MCF 10A (cell line): ENCODE measurements at regions of chr17 and their contacts with region 1.

Region 1: DNA sequence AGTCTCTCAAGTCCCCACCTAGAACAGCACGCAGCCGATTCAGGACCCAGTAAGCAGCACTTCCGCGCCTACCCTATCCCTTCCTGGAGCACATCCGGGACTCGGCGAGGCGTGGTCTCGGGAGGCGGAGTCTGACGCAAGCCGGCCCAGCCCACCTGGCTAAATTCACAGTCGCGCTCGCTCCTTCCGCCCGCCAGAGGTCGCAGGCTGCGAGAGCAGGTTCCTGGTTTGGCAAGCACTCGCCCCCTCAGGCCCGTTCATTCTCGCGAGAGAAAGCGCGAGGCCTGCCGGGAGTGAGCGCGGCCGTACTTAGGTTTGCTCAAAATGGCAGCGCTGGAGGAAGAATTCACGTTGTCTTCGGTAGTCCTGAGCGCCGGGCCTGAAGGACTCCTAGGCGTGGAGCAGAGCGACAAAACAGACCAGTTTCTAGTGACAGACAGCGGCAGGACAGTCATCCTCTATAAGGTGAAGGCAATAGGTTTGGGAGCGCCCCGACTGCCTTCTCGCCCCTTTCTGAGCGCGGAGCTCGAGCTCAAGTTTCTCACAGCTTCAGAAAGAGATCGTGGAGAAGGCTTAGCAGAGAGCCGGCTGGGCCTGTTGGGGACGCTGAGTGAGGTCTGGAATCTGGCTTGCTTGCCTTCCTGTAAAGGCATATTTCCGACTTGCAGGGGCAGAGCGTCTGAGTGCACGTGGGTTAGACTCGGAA is at the start of gene NOL11:
- DNase-seq: peak; percentile 97
- H3K4me3 Mint-ChIP-seq: peak within 1 kb of the TSS; percentile 98
- H3K27ac Mint-ChIP-seq: peak within 1 kb of the TSS; percentile 100
- H3K4me1 Mint-ChIP-seq: no peaks in the 10 kb centered on the region
- H3K27me3 Mint-ChIP-seq: no peaks in the 10 kb centered on the region
- CTCF ChIP-seq: peak; percentile 74
- total RNA-seq, gene NOL11: 45.4 and 50.4 TPM in 2 replicates

Region 2: GRCh38 chr17:67366193-67367157 is 351.3 kb before region 1 on chr17 and contains the start of gene PSMD12:
- CTCF ChIA-PET with region 1: no interaction called
- POLR2A ChIA-PET with region 1: interaction called, 19 read pairs
- intact Hi-C with region 1: loop called (anchors 10 kb)
- DNase-seq: peak; percentile 90
- H3K4me3 Mint-ChIP-seq: peak within 1 kb of the TSS; percentile 90
- H3K27ac Mint-ChIP-seq: peak within 1 kb of the TSS; percentile 74
- H3K4me1 Mint-ChIP-seq: peaks cover 18% of the 10 kb centered on the region
- H3K27me3 Mint-ChIP-seq: no peaks in the 10 kb centered on the region
- CTCF ChIP-seq: no peak
- total RNA-seq, gene PSMD12: 93.1 and 107 TPM in 2 replicates

Region 3: DNA sequence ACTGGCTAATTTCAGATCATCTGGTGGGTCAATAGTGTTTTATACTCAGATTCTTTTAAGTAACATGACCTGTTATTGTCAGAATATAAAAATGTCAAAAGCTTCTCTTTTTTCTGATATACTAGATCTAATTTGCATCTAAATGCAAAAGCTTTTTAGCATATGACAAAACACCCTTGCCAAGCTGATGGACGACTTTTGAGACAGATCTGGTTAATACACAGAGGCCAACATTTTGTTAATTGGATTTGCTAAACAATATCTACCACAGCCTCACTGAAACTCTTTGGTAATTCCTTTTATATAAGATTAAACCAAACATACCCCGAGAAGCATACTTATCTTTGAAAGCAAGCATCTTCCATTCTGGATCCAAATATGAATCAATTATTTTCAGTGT is 10.3 kb before region 1 on chr17:
- CTCF ChIA-PET with region 1: interaction called, 13 read pairs
- POLR2A ChIA-PET with region 1: interaction called, 23 read pairs
- intact Hi-C with region 1: no loop called
- DNase-seq: no peak
- H3K4me3 Mint-ChIP-seq: no peak overlapping the region
- H3K27ac Mint-ChIP-seq: no peak overlapping the region
- H3K4me1 Mint-ChIP-seq: no peaks in the 10 kb centered on the region
- H3K27me3 Mint-ChIP-seq: no peaks in the 10 kb centered on the region
- CTCF ChIP-seq: no peak

Region 4: GRCh38 chr17:67779098-67779672 is 61.4 kb after region 1 on chr17:
- CTCF ChIA-PET with region 1: no interaction called
- POLR2A ChIA-PET with region 1: interaction called, 3 read pairs
- intact Hi-C with region 1: loop called (anchors 1 kb)
- DNase-seq: peak; percentile 58
- H3K4me3 Mint-ChIP-seq: no peak overlapping the region
- H3K27ac Mint-ChIP-seq: no peak overlapping the region
- H3K4me1 Mint-ChIP-seq: no peaks in the 10 kb centered on the region
- H3K27me3 Mint-ChIP-seq: no peaks in the 10 kb centered on the region
- CTCF ChIP-seq: peak; percentile 71

Region 5: DNA sequence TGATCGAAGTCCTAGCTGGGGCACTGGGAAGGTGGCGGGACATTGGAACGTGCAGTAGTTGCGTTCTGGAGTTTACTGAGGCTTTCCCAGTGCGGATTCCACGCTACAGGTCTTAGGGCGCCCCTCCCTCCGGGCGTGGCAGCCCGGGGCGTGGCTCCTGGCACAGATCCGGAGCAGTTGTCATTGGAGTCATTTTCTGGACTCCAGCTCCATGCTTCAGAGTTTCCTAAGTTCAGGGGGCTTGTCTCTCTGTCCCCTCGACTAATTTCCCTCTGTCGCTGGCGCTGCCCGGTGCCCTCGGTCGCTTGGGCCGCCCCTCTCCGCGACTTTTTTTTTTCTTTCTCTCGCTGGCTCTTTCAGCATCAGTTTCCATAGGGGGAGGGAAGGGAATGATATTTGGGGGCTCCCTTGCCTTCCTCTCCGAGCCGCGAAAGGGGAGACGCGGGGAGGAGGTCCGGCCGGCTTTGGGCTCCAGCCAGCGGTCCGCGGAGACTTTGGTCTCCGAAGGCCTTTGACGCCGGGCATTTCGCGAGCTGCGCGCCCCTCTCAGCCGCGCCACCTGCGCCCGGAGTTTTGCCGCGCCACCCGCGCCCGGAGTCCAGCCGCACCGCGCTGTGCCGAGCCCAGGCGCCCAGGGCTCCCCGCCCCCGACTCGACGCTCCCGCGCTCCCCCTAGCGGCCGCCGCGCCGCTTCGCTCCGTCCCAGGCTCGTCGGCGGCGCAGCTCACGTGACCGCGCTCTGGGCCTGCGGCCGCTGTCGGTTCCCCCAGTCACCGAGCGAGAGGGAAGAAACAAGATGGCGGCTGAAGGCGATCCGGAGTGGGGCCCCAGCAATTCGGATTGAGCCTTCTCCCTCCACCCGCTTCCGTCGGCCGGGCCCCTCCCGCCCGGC is 107.2 kb after region 1 on chr17 and contains the start of gene BPTF:
- CTCF ChIA-PET with region 1: interaction called, 7 read pairs
- POLR2A ChIA-PET with region 1: interaction called, 45 read pairs
- intact Hi-C with region 1: loop called (anchors 2 kb)
- DNase-seq: peak; percentile 91
- H3K4me3 Mint-ChIP-seq: peak within 1 kb of the TSS; percentile 99
- H3K27ac Mint-ChIP-seq: peak within 1 kb of the TSS; percentile 95
- H3K4me1 Mint-ChIP-seq: peaks cover 6% of the 10 kb centered on the region
- H3K27me3 Mint-ChIP-seq: no peaks in the 10 kb centered on the region
- CTCF ChIP-seq: peak; percentile 94
- total RNA-seq, gene BPTF: 54.9 and 63.7 TPM in 2 replicates

Region 6: DNA sequence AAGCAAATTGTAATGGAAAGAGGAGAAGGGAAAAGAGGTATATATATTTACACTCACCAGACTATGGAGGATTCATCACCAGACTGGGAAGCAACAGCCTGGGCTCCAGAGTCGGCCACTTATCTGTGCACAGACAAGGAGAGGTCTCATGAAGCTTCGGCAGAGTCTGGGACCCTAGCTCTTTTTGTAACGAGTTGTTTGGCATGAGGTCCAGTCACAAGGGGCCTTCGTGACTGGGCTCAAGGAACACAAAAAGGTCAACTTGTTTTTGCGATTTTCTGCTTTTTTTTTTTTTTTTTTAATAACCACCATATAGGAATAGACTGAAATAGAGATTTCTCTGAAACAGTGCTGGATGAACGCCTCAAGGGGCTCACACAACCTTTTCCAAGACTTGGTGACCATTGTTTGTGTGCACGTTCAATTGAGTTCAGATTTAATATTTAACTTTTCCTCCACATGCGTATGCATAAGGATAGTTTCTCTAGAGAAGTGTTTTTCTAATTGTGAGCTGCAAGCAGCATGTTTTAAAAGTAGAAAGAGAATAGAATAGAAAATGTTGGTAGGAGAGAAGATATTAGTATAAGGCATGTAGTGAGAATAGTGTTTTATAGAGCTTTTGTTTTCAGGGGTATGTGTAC is 133.3 kb after region 1 on chr17:
- CTCF ChIA-PET with region 1: no interaction called
- POLR2A ChIA-PET with region 1: no interaction called
- intact Hi-C with region 1: no loop called
- DNase-seq: no peak
- H3K4me3 Mint-ChIP-seq: no peak overlapping the region
- H3K27ac Mint-ChIP-seq: no peak overlapping the region
- H3K4me1 Mint-ChIP-seq: peaks cover 10% of the 10 kb centered on the region
- H3K27me3 Mint-ChIP-seq: no peaks in the 10 kb centered on the region
- CTCF ChIP-seq: no peak